Colonic mucosa (tissue), 4 donors: ENCODE measurements at regions of chr13 and their contacts with region 1.

Region 1: DNA sequence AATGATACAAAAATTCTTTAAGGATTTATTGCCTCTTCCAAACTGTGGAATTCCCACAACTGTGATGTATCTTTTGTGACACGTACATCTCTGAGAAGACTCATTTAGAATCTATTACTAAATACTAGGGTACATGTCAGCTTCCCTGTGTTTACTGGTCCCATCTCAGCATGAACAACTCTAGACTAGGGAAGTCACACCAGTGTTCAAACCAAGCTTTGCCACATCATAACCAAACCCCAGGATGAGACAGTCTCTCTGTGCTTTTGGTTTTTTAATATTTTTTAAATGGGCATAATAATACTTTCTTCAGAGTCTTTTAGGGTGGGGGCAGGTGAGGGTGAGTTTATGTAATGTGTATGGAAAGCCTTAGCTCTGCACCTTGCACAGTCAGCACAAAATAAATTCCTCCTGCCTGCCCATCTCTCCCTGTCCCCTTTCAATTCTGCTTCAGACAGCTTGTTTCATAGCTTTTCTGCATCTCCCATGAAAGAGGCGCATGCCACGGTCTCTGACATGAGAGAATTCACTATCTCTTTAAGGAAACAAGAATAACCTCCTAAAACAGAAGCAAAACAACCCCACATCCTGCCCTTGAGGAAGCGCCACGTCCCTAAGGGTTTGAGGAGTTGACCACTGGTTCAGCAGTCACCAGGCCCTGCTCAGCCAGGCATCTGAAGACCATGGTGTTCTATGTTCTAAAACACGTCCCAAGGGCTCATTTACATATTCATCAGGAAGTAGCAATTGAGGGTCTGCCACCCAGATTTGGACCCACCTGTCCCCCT is 174.5 kb downstream of the USP12 start:
- DNase-seq: no peak
- H3K4me3 ChIP-seq: no peak overlapping the region
- H3K27ac ChIP-seq: no peak overlapping the region
- H3K4me1 ChIP-seq: no peaks in the 10 kb centered on the region
- H3K27me3 ChIP-seq: no peaks in the 10 kb centered on the region
- CTCF ChIP-seq: no peak

Region 2: GRCh38 chr13:27270594-27271520 is 273.7 kb after region 1 on chr13 and contains the start of gene RASL11A:
- intact Hi-C with region 1: loop called (anchors 10 kb)
- DNase-seq: peak; percentile 90
- H3K4me3 ChIP-seq: peak within 1 kb of the TSS; percentile 87
- H3K27ac ChIP-seq: peak within 1 kb of the TSS; percentile 97
- H3K4me1 ChIP-seq: peaks cover 7% of the 10 kb centered on the region
- H3K27me3 ChIP-seq: no peaks in the 10 kb centered on the region
- CTCF ChIP-seq: peak; percentile 96
- total RNA-seq, gene RASL11A: 44.8 to 124 TPM